ENCODE measurements at regions of chr1 and their contacts with region 1.

Region 1: DNA sequence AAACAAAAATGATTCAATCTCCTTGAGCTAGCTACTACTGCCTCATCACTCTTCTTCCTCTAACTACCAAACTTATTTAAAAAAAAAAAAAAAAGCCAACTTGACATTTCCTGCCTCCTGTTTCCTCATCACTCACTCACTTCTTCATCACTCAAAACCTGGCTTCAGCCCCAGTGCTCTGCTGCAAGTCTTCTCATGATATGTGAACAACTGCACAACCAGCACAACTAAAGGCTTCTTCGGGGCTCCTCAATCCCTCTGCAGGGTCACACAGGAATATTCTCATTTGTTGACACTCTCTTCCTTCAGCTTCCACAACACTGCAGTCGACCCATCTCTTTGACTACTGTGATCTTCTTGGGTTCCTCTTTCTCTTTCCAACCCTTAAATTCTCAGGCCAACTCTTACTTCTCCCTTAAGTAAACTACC is 7.6 kb downstream of the MTF1 start:
- DNase-seq: no peak
- ATAC-seq: peak; percentile 47
- H3K4me3 Mint-ChIP-seq: no peak overlapping the region
- H3K27ac Mint-ChIP-seq: no peak overlapping the region
- H3K4me1 Mint-ChIP-seq: peaks cover 38% of the 10 kb centered on the region
- H3K27me3 Mint-ChIP-seq: no peaks in the 10 kb centered on the region
- CTCF ChIP-seq: no peak

Region 2: GRCh38 chr1:37692078-37692833 is 159.5 kb before region 1 on chr1 and contains the start of gene CDCA8:
- CTCF ChIA-PET with region 1: interaction called, 3 read pairs
- POLR2A ChIA-PET with region 1: interaction called, 10 read pairs
- intact Hi-C with region 1: loop called (anchors 5 kb)
- DNase-seq: peak; percentile 99
- ATAC-seq: peak; percentile 90
- H3K4me3 Mint-ChIP-seq: peak within 1 kb of the TSS; percentile 98
- H3K27ac Mint-ChIP-seq: peak within 1 kb of the TSS; percentile 93
- H3K4me1 Mint-ChIP-seq: peaks cover 31% of the 10 kb centered on the region
- H3K27me3 Mint-ChIP-seq: no peaks in the 10 kb centered on the region
- CTCF ChIP-seq: no peak
- total RNA-seq, gene CDCA8: 53.7 to 56.0 TPM